Stomach (tissue), 19 donors: ENCODE measurements at regions of chr12 and their contacts with region 1.

Region 1: GRCh38 chr12:37672655-37673260 is 643.8 kb upstream of the ALG10B start:
- DNase-seq: no peak
- H3K4me3 ChIP-seq: no peak overlapping the region
- H3K27ac ChIP-seq: no peak overlapping the region
- H3K4me1 ChIP-seq: no peaks in the 10 kb centered on the region
- H3K27me3 ChIP-seq: no peaks in the 10 kb centered on the region
- CTCF ChIP-seq: no peak
- EP300 ChIP-seq: no peak
- POLR2A ChIP-seq: no peak

Region 2: GRCh38 chr12:37733856-37734255 is 61.1 kb after region 1 on chr12:
- intact Hi-C with region 1: no loop called
- DNase-seq: no peak
- H3K4me3 ChIP-seq: no peak overlapping the region
- H3K27ac ChIP-seq: no peak overlapping the region
- H3K4me1 ChIP-seq: no peaks in the 10 kb centered on the region
- H3K27me3 ChIP-seq: no peaks in the 10 kb centered on the region
- CTCF ChIP-seq: no peak
- EP300 ChIP-seq: no peak
- POLR2A ChIP-seq: no peak

Region 3: GRCh38 chr12:38149395-38150286 is 476.9 kb after region 1 on chr12:
- intact Hi-C with region 1: loop called (anchors 10 kb)
- DNase-seq: no peak
- H3K4me3 ChIP-seq: no peak overlapping the region
- H3K27ac ChIP-seq: no peak overlapping the region
- H3K4me1 ChIP-seq: no peaks in the 10 kb centered on the region
- H3K27me3 ChIP-seq: no peaks in the 10 kb centered on the region
- CTCF ChIP-seq: no peak
- EP300 ChIP-seq: no peak
- POLR2A ChIP-seq: no peak

Region 4: DNA sequence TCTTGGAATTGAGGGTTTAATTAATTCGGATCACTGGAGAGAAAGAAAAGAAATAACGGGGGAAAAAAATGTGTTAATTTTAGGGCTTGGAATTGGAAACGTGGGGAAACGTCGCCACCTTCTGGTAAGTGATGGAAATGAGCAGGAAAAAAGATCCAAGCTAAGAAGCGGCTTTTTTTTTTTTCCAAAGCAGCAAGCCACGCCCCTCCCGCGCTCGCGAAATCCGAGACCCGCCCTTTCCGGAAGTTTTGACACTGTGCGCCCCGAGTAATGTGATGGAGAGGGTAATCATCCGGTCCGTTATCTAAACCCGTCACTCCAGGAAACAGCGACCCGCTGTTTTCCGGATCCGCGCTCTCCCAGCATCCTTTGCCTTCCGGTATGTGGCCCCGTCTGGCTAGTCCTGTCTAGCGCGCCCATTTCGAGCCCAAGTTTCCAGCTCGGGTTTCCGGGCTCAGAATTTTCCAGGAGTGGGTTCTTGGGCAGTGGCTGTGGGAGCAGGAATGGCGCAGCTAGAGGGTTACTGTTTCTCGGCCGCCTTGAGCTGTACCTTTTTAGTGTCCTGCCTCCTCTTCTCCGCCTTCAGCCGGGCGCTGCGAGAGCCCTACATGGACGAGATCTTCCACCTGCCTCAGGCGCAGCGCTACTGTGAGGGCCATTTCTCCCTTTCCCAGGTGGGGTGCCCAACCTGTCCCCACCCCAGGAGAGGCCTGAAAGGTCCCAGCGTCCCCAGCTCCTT is 643.8 kb after region 1 on chr12 and contains the start of gene ALG10B:
- intact Hi-C with region 1: no loop called
- DNase-seq: peak; percentile 92 to 98
- H3K4me3 ChIP-seq: peak within 1 kb of the TSS; percentile 58 to 80 (median 65)
- H3K27ac ChIP-seq: peak within 1 kb of the TSS; percentile 60 to 89 (median 87)
- H3K4me1 ChIP-seq: peaks cover 0 to 33% (median 18%) of the 10 kb centered on the region in 4 donors
- H3K27me3 ChIP-seq: no peaks in the 10 kb centered on the region
- CTCF ChIP-seq: peak in 5 of 7 experiments; percentile 56 to 74 (median 69)
- EP300 ChIP-seq: no peak
- POLR2A ChIP-seq: no peak
- total RNA-seq, gene ALG10B: 0.58 to 16.5 (median 2.9) TPM